ENCODE measurements at regions of chr2 and their contacts with region 1.

Region 1: GRCh38 chr2:233303252-233303651 is 4.4 kb upstream of the SAG start:
- DNase-seq: no peak
- ATAC-seq: no peak
- H3K4me3 Mint-ChIP-seq: no peak overlapping the region
- H3K27ac Mint-ChIP-seq: no peak overlapping the region
- H3K4me1 Mint-ChIP-seq: peaks cover 4 to 12% (median 9%) of the 10 kb centered on the region in 4 donors
- H3K27me3 Mint-ChIP-seq: no peaks in the 10 kb centered on the region

Region 2: DNA sequence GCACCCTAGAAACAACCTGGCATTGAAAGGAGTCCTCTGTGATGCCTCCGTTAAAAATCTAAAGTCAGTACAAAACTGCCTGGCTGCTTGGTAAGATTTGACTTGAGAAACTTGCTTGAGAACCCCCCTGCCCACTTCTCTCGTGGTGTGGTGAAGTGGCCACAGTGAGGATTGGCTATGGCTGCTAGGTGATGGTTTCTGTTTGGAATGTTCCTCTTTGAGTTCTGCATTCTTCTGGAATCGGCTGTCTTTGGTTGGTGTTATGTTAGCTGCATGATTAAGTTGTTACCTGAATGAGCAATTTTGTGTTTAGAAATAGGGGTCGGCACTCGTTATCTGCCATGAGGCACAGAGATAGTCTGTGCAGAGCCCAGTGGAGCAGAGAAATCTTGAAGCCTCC is 17.3 kb before region 1 on chr2:
- POLR2A ChIA-PET with region 1: no interaction called
- DNase-seq: no peak
- ATAC-seq: no peak
- H3K4me3 Mint-ChIP-seq: no peak overlapping the region
- H3K27ac Mint-ChIP-seq: peak overlapping the region in 7 of 10 donors; percentile 6 to 89 (median 70)
- H3K4me1 Mint-ChIP-seq: peaks cover 28 to 50% (median 41%) of the 10 kb centered on the region in 4 donors
- H3K27me3 Mint-ChIP-seq: no peaks in the 10 kb centered on the region

Region 3: GRCh38 chr2:233362742-233363141 is 59.5 kb after region 1 on chr2:
- POLR2A ChIA-PET with region 1: interaction called, 10 read pairs
- DNase-seq: no peak
- ATAC-seq: no peak
- H3K4me3 Mint-ChIP-seq: no peak overlapping the region
- H3K27ac Mint-ChIP-seq: peak overlapping the region in 1 of 10 donors; percentile 19
- H3K4me1 Mint-ChIP-seq: peaks cover 28 to 86% (median 74%) of the 10 kb centered on the region in 4 donors
- H3K27me3 Mint-ChIP-seq: no peaks in the 10 kb centered on the region